MCF 10A (cell line): ENCODE measurements at regions of chr1 and their contacts with region 1.

Region 1: DNA sequence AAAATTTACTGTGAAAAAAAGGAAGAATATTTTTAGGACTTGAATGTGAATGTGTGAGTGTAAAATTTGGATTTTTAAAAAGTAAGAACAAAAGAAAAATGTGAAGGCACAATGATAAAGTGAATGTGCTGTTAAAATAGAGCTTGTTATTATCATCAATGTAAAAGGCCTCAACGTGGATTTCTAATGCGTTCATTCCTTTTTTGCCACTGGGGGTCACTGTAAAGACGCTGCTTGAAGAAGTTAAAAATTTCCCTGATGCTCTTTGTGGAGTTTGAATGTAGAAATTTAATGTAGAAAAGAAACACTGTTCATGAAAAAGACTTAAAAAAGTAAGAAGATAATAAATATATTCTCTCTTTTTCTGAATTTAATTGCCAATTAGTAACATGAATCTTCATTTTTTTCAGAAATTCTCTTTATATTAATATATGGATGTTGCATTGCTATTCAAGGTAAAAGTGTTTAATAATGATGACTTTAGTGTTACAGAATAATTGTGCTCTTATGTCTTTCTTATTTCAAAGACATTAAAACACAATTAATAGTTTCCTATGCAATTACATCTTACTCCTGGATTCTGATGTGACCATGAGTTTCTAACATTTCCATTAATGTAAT is 161.5 kb downstream of the DNM3 start:
- DNase-seq: peak; percentile 70
- H3K4me3 Mint-ChIP-seq: no peak overlapping the region
- H3K27ac Mint-ChIP-seq: no peak overlapping the region
- H3K4me1 Mint-ChIP-seq: peaks cover 18% of the 10 kb centered on the region
- H3K27me3 Mint-ChIP-seq: no peaks in the 10 kb centered on the region
- CTCF ChIP-seq: peak; percentile 95

Region 2: DNA sequence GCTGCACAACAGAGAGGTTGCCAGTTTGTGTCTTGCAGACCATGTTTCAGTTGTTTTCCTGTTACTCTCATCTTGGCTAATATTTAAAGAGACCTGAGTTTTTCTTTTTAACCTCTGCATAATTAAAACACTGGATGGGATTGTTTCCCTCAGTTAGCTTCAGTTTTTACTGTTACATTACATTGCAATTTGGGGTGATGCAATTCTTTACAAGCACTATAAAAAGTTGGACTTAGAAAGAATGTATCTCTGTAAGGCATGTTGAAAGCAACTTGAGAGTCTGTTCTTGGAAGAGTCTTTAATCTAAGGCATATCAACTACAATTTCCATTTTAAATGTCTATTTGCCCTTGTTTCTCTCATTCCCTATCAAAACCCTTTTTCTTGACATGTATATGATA is 62.5 kb before region 1 on chr1:
- CTCF ChIA-PET with region 1: no interaction called
- POLR2A ChIA-PET with region 1: no interaction called
- intact Hi-C with region 1: no loop called
- DNase-seq: no peak
- H3K4me3 Mint-ChIP-seq: no peak overlapping the region
- H3K27ac Mint-ChIP-seq: no peak overlapping the region
- H3K4me1 Mint-ChIP-seq: no peaks in the 10 kb centered on the region
- H3K27me3 Mint-ChIP-seq: no peaks in the 10 kb centered on the region
- CTCF ChIP-seq: no peak

Region 3: GRCh38 chr1:172024516-172024915 is 21.7 kb after region 1 on chr1:
- CTCF ChIA-PET with region 1: interaction called, 15 read pairs
- POLR2A ChIA-PET with region 1: no interaction called
- intact Hi-C with region 1: no loop called
- DNase-seq: peak; percentile 81
- H3K4me3 Mint-ChIP-seq: no peak overlapping the region
- H3K27ac Mint-ChIP-seq: no peak overlapping the region
- H3K4me1 Mint-ChIP-seq: no peaks in the 10 kb centered on the region
- H3K27me3 Mint-ChIP-seq: no peaks in the 10 kb centered on the region
- CTCF ChIP-seq: no peak

Region 4: DNA sequence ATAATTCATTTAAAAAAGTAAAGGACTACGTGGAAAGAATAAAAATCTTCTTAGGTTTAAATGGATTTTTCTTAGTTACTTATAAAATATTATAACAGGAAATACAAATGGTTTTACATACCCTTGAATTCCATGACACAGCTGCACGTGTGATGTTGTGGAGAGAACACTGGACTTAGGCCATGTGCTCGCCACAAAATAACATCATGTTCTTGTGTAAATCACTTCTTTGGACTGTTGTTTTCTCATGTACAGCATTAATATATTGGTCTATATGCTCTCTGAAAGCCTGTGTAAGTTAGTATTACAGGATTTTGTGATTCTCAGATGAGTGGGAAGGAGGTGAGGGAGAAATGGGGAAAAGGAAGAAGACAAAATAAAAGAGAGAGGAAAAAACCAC is 66.7 kb after region 1 on chr1:
- CTCF ChIA-PET with region 1: interaction called, 12 read pairs
- POLR2A ChIA-PET with region 1: no interaction called
- intact Hi-C with region 1: no loop called
- DNase-seq: no peak
- H3K4me3 Mint-ChIP-seq: no peak overlapping the region
- H3K27ac Mint-ChIP-seq: peak overlapping the region; percentile 63
- H3K4me1 Mint-ChIP-seq: peaks cover 7% of the 10 kb centered on the region
- H3K27me3 Mint-ChIP-seq: no peaks in the 10 kb centered on the region
- CTCF ChIP-seq: no peak

Region 5: DNA sequence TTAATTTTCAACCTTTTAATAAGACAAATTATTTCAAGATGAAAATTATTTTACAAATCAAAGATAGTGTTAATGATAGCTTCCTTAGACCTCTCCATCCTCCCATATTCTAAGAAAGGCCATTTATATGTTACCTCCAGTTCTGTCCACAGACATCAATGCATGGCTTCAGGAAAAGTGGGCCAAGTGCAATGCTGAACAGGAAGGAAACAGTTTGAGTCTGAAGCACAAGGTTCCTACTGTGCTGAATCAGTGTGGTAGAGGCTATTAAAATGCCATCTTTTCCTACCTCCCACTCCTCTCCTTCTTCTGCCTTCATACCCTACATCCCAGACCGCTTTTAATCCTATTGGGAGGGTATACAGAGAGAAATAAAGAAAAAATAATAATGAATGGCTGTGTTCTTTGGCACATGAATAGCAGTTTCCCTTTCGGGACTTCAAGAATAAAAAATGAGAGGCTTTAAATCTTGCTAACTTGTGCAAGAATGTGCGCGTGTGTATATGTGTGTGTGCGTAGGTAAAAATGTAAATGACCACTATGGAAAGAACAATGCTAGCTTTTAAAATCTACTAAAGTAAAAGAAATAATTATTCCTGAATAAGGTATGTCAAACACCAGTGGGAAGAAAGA is 355.0 kb after region 1 on chr1:
- CTCF ChIA-PET with region 1: interaction called, 13 read pairs
- POLR2A ChIA-PET with region 1: no interaction called
- intact Hi-C with region 1: no loop called
- DNase-seq: peak; percentile 18
- H3K4me3 Mint-ChIP-seq: peak overlapping the region; percentile 53
- H3K27ac Mint-ChIP-seq: peak overlapping the region; percentile 87
- H3K4me1 Mint-ChIP-seq: peaks cover 62% of the 10 kb centered on the region
- H3K27me3 Mint-ChIP-seq: no peaks in the 10 kb centered on the region
- CTCF ChIP-seq: no peak

Region 6: GRCh38 chr1:172429331-172430127 is 426.7 kb after region 1 on chr1:
- CTCF ChIA-PET with region 1: interaction called, 145 read pairs
- POLR2A ChIA-PET with region 1: interaction called, 6 read pairs
- intact Hi-C with region 1: loop called (anchors 1 kb)
- DNase-seq: peak; percentile 83
- H3K4me3 Mint-ChIP-seq: no peak overlapping the region
- H3K27ac Mint-ChIP-seq: no peak overlapping the region
- H3K4me1 Mint-ChIP-seq: peaks cover 5% of the 10 kb centered on the region
- H3K27me3 Mint-ChIP-seq: no peaks in the 10 kb centered on the region
- CTCF ChIP-seq: peak; percentile 78